Panc1 (cell line): ENCODE measurements at regions of chr9 and their contacts with region 1.

Region 1: GRCh38 chr9:36023260-36024048 is 13.3 kb upstream of the RECK start:
- DNase-seq: peak; percentile 74
- ATAC-seq: peak; percentile 97
- H3K4me3 ChIP-seq: no peak overlapping the region
- H3K27ac ChIP-seq: no peak overlapping the region
- H3K4me1 ChIP-seq: no peaks in the 10 kb centered on the region
- H3K27me3 ChIP-seq: peaks cover 3% of the 10 kb centered on the region; the same call in 1 of the 2 replicates
- CTCF ChIP-seq: no peak

Region 2: DNA sequence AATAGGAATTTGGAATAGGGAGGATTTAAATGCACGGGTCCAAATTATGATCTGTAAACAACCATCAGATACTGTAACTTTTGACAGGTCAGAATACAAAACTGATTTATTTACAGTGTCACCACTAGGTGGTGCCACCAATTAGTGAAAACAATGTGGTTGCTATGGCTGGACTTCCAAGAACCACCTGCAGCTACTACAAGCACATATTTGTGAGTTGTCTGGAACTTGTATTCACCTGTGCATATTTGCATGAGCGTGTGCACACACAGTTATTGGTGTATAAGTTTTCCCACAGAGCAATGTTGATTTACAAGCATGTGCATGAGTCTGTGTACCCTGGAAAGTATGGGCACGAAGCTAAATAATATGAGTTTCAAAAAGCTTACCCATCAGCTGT is 120.4 kb before region 1 on chr9:
- CTCF ChIA-PET with region 1: interaction called, 15 read pairs
- POLR2A ChIA-PET with region 1: no interaction called
- in situ Hi-C with region 1: no loop called
- intact Hi-C with region 1: no loop called
- DNase-seq: no peak
- ATAC-seq: peak; percentile 47
- H3K4me3 ChIP-seq: no peak overlapping the region
- H3K27ac ChIP-seq: no peak overlapping the region
- H3K4me1 ChIP-seq: peaks cover 50% of the 10 kb centered on the region
- H3K27me3 ChIP-seq: 0 out of 2 replicates have a peak, but pooled peaks cover 2% of the 10 kb centered on the region
- CTCF ChIP-seq: no peak

Region 3: GRCh38 chr9:35954942-35955546 is 68.4 kb before region 1 on chr9:
- CTCF ChIA-PET with region 1: interaction called, 25 read pairs
- POLR2A ChIA-PET with region 1: no interaction called
- in situ Hi-C with region 1: no loop called
- intact Hi-C with region 1: loop called (anchors 2 kb)
- DNase-seq: peak; percentile 48
- ATAC-seq: peak; percentile 94
- H3K4me3 ChIP-seq: no peak overlapping the region
- H3K27ac ChIP-seq: no peak overlapping the region
- H3K4me1 ChIP-seq: no peaks in the 10 kb centered on the region
- H3K27me3 ChIP-seq: peaks cover 18% of the 10 kb centered on the region
- CTCF ChIP-seq: peak; percentile 92

Region 4: DNA sequence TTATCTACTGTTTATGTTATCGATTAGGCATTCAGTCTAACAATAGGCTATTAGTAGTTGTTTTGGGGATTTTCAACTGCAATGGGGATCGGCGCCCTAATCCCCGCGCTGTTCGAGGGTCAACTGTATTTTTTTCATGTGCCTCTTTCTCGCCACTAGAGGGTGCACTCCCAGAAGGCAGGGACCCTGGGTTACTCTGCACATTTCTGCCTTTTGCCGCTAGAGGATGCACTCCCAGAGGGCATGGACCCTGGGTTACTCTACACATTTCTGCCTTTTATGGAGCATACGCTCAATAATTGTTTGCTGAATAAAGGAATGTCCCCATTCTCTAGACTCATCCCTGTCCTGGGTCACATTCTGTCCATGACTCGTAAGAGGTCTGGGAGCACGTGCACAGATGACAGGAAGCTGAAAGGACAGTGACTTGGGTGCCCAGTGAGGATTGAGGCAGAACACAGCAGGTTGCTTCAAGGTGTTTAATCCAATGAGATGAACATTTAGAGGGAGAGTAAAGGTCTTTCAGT is 14.6 kb before region 1 on chr9:
- CTCF ChIA-PET with region 1: interaction called, 34 read pairs
- POLR2A ChIA-PET with region 1: no interaction called
- in situ Hi-C with region 1: no loop called
- intact Hi-C with region 1: no loop called
- DNase-seq: peak; percentile 64
- ATAC-seq: peak; percentile 97
- H3K4me3 ChIP-seq: no peak overlapping the region
- H3K27ac ChIP-seq: no peak overlapping the region
- H3K4me1 ChIP-seq: no peaks in the 10 kb centered on the region
- H3K27me3 ChIP-seq: peaks cover 73% of the 10 kb centered on the region
- CTCF ChIP-seq: peak; percentile 100

Region 5: DNA sequence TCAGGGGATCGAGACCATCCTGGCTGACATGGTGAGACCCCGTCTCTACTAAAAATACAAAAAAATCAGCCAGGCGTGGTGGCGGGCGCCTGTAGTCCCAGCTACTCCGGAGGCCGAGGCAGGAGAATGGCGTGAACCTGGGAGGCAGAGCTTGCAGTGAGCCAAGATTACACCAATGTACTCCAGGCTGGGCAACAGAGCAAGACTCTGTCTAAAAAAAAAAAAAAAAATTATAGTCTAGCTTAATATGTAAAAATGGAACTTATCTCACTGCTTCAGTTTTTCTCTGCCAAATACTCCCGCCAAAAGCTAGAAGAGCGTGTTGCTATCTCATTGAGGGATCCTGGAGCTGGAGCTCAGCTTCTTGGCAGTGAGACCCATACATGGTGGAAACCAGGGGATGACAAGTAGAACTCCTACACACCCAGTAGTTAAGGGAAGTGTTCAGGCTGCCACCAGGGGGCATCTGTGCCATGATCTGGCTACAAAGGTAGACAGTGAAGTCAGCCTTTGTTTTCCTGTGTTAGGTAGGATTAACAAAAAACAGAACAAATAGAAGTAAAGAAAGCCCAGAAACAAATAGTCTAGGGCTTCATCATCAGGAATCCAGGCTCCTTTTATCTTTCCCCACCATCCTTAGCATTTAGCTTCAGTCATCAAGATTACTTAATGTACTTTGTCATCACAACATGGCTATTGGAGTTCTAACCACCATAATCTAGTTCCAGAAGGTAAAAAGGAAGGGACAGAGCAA is 79.5 kb after region 1 on chr9:
- CTCF ChIA-PET with region 1: interaction called, 3 read pairs
- POLR2A ChIA-PET with region 1: interaction called, 11 read pairs
- in situ Hi-C with region 1: no loop called
- intact Hi-C with region 1: no loop called
- DNase-seq: peak; percentile 69
- ATAC-seq: peak; percentile 95
- H3K4me3 ChIP-seq: no peak overlapping the region
- H3K27ac ChIP-seq: no peak overlapping the region
- H3K4me1 ChIP-seq: peaks cover 3% of the 10 kb centered on the region; the same call in 1 of the 2 replicates
- H3K27me3 ChIP-seq: no peaks in the 10 kb centered on the region
- CTCF ChIP-seq: peak; percentile 98

Region 6: GRCh38 chr9:36127652-36128244 is 104.3 kb after region 1 on chr9:
- CTCF ChIA-PET with region 1: no interaction called
- POLR2A ChIA-PET with region 1: no interaction called
- in situ Hi-C with region 1: no loop called
- intact Hi-C with region 1: no loop called
- DNase-seq: no peak
- ATAC-seq: no peak
- H3K4me3 ChIP-seq: no peak overlapping the region
- H3K27ac ChIP-seq: no peak overlapping the region
- H3K4me1 ChIP-seq: no peaks in the 10 kb centered on the region
- H3K27me3 ChIP-seq: no peaks in the 10 kb centered on the region
- CTCF ChIP-seq: no peak